Transverse colon (tissue), 4 donors: ENCODE measurements at regions of chr3 and their contacts with region 1.

Region 1: DNA sequence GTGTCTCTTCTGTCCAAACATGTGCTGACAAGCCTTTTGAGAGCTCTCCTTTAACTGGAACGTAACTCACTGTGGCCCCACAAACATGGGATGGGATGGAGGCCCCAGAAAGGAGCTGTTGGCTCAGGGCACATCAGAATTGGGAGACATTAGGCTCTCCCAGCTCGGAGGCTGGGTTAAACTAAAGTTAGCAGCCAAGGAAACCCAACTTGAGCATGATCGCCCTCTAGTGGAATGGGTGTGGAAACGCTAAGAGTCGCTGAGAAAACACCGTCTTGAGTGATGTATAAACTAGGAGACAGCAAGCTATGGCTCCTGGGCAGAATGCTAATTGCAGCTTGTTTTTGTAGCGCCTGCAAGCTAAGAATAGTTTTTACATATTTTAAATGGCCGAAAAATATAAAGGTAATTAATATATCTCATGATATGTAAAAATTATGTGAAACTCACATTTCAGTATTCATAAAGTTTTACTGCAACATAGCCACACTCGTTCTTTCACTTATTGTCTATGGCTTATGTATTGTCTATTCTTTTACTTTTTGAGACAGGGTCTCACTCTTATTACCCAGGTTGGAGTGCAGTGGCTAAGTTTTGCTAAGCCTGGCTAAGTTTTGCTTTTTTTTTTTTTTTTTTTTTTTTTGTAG is 138.8 kb upstream of the HACD2 start:
- DNase-seq: peak; percentile 49
- H3K4me3 ChIP-seq: no peak overlapping the region
- H3K27ac ChIP-seq: peak overlapping the region; percentile 20 to 63 (median 41)
- H3K4me1 ChIP-seq: peaks cover 5 to 25% (median 8%) of the 10 kb centered on the region in 4 donors
- H3K27me3 ChIP-seq: no peaks in the 10 kb centered on the region
- CTCF ChIP-seq: peak; percentile 71 to 85 (median 77)
- EP300 ChIP-seq: no peak
- POLR2A ChIP-seq: no peak

Region 2: DNA sequence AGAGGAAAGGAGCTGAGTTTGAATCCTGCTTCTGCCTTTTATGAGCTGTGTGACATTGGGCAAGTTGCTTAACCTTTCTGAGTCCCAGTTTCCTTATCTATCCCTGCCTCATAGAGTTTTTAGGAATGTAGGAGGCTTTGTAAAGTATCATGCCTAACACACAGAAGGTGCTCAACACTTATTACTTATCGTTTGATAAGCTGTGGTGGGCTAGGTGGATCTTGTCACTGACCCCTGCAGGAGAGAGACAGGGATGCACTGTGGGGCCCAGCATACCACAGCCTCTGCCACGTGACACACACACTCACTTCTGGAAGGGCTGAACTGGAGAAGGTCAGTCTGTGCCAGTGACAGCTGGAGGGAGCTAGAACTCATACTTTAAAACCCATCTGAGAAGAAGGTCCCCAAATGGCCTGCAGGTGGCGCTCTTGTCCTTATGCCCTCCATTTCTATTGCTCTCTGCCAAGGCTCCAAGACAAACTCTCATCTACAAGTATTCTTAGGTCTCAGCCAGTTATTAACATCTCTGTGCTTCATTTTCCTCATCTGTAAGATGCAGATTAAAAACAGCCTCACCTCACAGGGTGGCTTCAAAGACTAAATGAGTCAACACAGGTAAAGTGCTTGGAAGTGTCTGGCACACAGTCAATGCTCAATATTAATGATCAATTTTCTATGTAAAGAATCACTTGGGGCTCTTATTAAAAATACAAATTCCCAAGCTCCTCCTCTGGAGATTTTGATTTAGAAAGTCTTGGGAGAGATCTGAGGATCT is 81.3 kb before region 1 on chr3:
- in situ Hi-C with region 1: loop called in 1 of 4 experiments (anchors 10 kb)
- intact Hi-C with region 1: loop called (anchors 5 kb)
- DNase-seq: peak; percentile 84
- H3K4me3 ChIP-seq: no peak overlapping the region
- H3K27ac ChIP-seq: peak overlapping the region; percentile 64 to 81 (median 76)
- H3K4me1 ChIP-seq: peaks cover 0 to 11% (median 5%) of the 10 kb centered on the region in 4 donors
- H3K27me3 ChIP-seq: no peaks in the 10 kb centered on the region
- CTCF ChIP-seq: peak; percentile 74 to 92 (median 80)
- EP300 ChIP-seq: no peak
- POLR2A ChIP-seq: no peak

Region 3: GRCh38 chr3:123652346-123652984 is 71.2 kb before region 1 on chr3:
- in situ Hi-C with region 1: loop called (anchors 5 to 10 kb)
- intact Hi-C with region 1: loop called (anchors 2 kb)
- DNase-seq: peak; percentile 84
- H3K4me3 ChIP-seq: no peak overlapping the region
- H3K27ac ChIP-seq: peak overlapping the region; percentile 71 to 90 (median 80)
- H3K4me1 ChIP-seq: peaks cover 23 to 53% (median 27%) of the 10 kb centered on the region in 4 donors
- H3K27me3 ChIP-seq: no peaks in the 10 kb centered on the region
- CTCF ChIP-seq: peak; percentile 83 to 88 (median 84)
- EP300 ChIP-seq: no peak
- POLR2A ChIP-seq: no peak

Region 4: DNA sequence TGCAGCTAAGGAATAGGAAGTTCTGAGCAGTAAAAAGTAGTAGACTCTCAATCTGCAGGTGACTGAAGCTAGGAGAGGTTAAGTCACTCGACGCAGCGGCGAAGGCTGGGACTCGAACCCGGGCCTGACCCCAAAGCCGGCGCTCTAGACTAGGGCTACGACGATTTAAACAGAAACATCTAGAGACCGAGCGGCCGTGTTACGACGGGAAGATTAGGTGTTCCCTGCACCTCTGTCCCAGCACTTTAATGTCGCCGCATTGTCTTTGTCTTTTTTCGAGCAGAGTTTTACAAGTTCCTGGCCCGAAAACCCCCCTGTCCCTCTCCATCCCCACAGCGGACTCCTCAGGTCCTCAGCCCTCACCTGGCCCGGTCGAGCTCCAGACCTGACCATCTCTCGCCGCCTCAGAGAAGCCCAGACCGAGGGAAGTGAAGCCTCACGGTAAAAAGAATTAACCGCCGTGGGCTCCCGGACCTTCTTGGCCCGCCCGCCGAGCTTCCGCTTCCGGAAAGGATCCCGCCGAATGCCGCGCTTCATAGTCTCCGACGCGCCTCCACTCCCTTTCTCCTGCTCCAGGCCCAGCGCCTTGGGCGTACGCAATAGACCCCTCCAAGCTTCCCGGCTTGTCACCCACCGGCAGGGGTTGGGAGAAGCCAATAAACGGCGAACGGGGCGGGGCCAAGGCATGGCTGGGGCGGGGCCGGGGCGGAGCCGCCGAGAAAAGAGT is 237.3 kb after region 1 on chr3 and contains the start of gene CCDC14:
- in situ Hi-C with region 1: no loop called
- intact Hi-C with region 1: loop called (anchors 5 kb)
- DNase-seq: peak; percentile 93
- H3K4me3 ChIP-seq: peak within 1 kb of the TSS; percentile 63 to 79 (median 73)
- H3K27ac ChIP-seq: peak within 1 kb of the TSS; percentile 89 to 93 (median 92)
- H3K4me1 ChIP-seq: peaks cover 0 to 35% (median 7%) of the 10 kb centered on the region in 4 donors
- H3K27me3 ChIP-seq: no peaks in the 10 kb centered on the region
- CTCF ChIP-seq: peak in 1 of 5 experiments; percentile 5
- EP300 ChIP-seq: no peak
- POLR2A ChIP-seq: peak; percentile 85
- total RNA-seq, gene CCDC14: 93.1 to 117 (median 110) TPM